Heart right ventricle (tissue), 16 donors: ENCODE measurements at regions of chr10 and their contacts with region 1.

Region 1: GRCh38 chr10:126496771-126497545 is 108.7 kb upstream of the ADAM12 start:
- DNase-seq: no peak
- ATAC-seq: no peak
- H3K4me3 ChIP-seq: no peak overlapping the region
- H3K27ac ChIP-seq: no peak overlapping the region
- H3K4me1 ChIP-seq: no peaks in the 10 kb centered on the region
- H3K27me3 ChIP-seq: no peaks in the 10 kb centered on the region
- CTCF ChIP-seq: no peak

Region 2: GRCh38 chr10:125976960-125977603 is 519.9 kb before region 1 on chr10:
- intact Hi-C with region 1: loop called in 2 of 10 experiments (anchors 5 kb)
- DNase-seq: no peak
- ATAC-seq: no peak
- H3K4me3 ChIP-seq: no peak overlapping the region
- H3K27ac ChIP-seq: no peak overlapping the region
- H3K4me1 ChIP-seq: peaks cover 0 to under 1% (median 0%) of the 10 kb centered on the region in 9 donors
- H3K27me3 ChIP-seq: peaks cover 0 to 7% (median 0%) of the 10 kb centered on the region in 7 donors
- CTCF ChIP-seq: no peak

Region 3: GRCh38 chr10:126670895-126671261 is 173.9 kb after region 1 on chr10:
- intact Hi-C with region 1: no loop called
- DNase-seq: no peak
- ATAC-seq: no peak
- H3K4me3 ChIP-seq: no peak overlapping the region
- H3K27ac ChIP-seq: no peak overlapping the region
- H3K4me1 ChIP-seq: no peaks in the 10 kb centered on the region
- H3K27me3 ChIP-seq: peaks cover 0 to 4% (median 0%) of the 10 kb centered on the region in 7 donors
- CTCF ChIP-seq: no peak